ENCODE measurements at regions of chr12 and their contacts with region 1.

Region 1: GRCh38 chr12:108691175-108691997 is 39.9 kb downstream of the CORO1C start:
- DNase-seq: peak; percentile 80 to 98 (median 85)
- ATAC-seq: peak; percentile 89
- H3K4me3 ChIP-seq: peak overlapping the region; percentile 15; the same call in 1 of the 2 replicates
- H3K27ac ChIP-seq: peak overlapping the region; percentile 99
- H3K4me1 ChIP-seq: peaks cover 47 to 83% of the 10 kb centered on the region in 2 experiments
- H3K27me3 ChIP-seq: no peaks in the 10 kb centered on the region
- CTCF ChIP-seq: peak; percentile 33 to 55 (median 51); a peak in 4 of 6 replicates
- EP300 ChIP-seq: peak; percentile 96
- POLR2A ChIP-seq: peak; percentile 83
- RAD21 ChIP-seq: peak in 1 of 2 experiments; percentile 36; a peak in 1 of 4 replicates

Region 2: GRCh38 chr12:108633534-108634248 is 57.7 kb before region 1 on chr12 and contains the start of gene SELPLG:
- CTCF ChIA-PET with region 1: no interaction called
- POLR2A ChIA-PET with region 1: no interaction called
- in situ Hi-C with region 1: no loop called
- intact Hi-C with region 1: loop called (anchors 5 kb)
- DNase-seq: peak in 3 of 4 experiments; percentile 40 to 50 (median 45)
- ATAC-seq: no peak
- H3K4me3 ChIP-seq: no peak within 1 kb of the TSS
- H3K27ac ChIP-seq: peak within 1 kb of the TSS; percentile 76
- H3K4me1 ChIP-seq: peaks cover 55 to 57% of the 10 kb centered on the region in 2 experiments
- H3K27me3 ChIP-seq: no peaks in the 10 kb centered on the region
- CTCF ChIP-seq: no peak
- EP300 ChIP-seq: no peak
- POLR2A ChIP-seq: no peak
- RAD21 ChIP-seq: no peak
- polyA plus RNA-seq, gene SELPLG: 0.22 to 0.34 TPM

Region 3: GRCh38 chr12:108701779-108702441 is 10.5 kb after region 1 on chr12:
- CTCF ChIA-PET with region 1: no interaction called
- POLR2A ChIA-PET with region 1: interaction called, 33 read pairs
- in situ Hi-C with region 1: no loop called
- intact Hi-C with region 1: no loop called
- DNase-seq: peak in 2 of 4 experiments; percentile 35 to 68
- ATAC-seq: peak; percentile 76
- H3K4me3 ChIP-seq: no peak overlapping the region
- H3K27ac ChIP-seq: peak overlapping the region; percentile 63
- H3K4me1 ChIP-seq: peaks cover 16 to 60% of the 10 kb centered on the region in 2 experiments
- H3K27me3 ChIP-seq: no peaks in the 10 kb centered on the region
- CTCF ChIP-seq: no peak
- EP300 ChIP-seq: peak; percentile 24; the same call in 1 of the 2 replicates
- POLR2A ChIP-seq: no peak
- RAD21 ChIP-seq: no peak

Region 4: DNA sequence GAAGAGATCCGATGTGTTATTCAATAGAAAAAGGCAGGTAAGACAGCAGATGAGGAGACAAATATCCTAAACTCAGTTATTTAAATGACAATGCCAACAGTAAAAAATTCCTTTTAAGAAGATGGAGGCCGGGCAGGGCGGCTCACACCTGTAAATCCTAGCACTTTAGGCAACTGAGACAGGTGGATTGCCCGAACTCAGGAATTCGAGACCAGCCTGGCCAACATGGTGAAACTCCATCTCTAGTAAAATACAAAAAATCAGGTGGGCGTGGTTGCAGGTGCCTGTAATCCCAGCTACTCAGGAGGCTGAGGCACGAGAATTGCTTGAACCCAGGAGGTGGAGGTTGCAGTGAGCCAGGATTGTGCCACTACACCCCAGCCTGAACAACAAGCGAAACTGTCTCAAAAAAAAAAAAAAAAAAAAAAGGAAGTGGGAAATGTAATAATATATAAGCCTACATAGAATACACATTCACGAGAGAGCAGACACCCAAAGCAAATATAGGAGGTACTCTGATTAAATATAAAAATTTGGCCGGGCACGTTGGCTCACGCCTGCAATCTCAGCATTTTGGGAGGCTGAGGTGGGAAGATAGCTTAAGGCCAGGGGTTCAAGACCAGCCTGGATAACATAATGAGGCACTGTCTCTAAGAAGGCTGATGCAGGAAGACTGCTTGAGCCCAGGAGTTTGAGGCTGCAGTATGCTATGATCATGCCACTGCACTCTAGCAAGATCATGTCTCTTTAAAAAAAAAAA is 21.0 kb after region 1 on chr12:
- CTCF ChIA-PET with region 1: no interaction called
- POLR2A ChIA-PET with region 1: interaction called, 11 read pairs
- in situ Hi-C with region 1: no loop called
- intact Hi-C with region 1: no loop called
- DNase-seq: no peak
- ATAC-seq: no peak
- H3K4me3 ChIP-seq: no peak overlapping the region
- H3K27ac ChIP-seq: no peak overlapping the region
- H3K4me1 ChIP-seq: peaks cover 18 to 26% of the 10 kb centered on the region in 2 experiments; a peak in 4 of 5 replicates
- H3K27me3 ChIP-seq: no peaks in the 10 kb centered on the region
- CTCF ChIP-seq: no peak
- EP300 ChIP-seq: no peak
- POLR2A ChIP-seq: no peak
- RAD21 ChIP-seq: no peak

Region 5: DNA sequence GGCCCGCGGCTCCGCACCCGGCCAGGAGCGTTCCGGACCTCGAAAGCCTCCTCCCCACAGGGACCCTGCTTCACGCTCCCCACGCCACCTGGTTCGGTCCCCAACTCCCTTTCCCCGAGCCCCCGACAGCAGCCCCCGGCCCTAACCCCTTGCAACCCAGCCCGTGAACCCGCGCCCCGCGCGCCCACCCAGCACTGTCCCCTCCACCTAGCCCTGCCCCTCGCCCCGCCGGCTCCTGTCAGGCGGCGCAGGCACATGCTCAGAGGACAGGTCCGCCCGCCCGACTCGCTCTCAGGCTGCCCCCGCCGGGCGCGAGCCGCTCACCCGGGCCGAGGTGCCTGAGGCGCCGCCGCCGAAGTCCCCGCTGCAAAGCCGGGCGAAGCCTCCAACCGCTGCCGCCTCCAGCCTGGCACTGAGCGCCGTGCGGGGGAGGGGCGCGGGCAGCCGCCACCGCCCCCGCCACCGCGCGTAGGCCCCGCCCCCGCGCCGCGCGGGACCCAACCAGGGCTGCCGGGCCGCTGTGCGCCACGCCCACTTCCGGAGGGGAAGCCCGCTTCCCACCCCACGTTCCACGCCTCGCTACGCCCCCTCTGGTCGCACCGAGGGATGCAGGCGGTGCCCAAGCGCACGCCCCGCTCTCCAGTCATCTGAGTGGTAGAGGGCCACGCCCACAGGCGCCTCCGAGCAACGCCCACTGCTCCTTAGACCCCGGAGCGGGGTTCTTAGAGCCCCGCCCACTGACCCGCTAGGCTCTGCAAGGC is 39.9 kb after region 1 on chr12 and contains the start of gene CORO1C:
- CTCF ChIA-PET with region 1: no interaction called
- POLR2A ChIA-PET with region 1: interaction called, 4 read pairs
- in situ Hi-C with region 1: no loop called
- intact Hi-C with region 1: loop called (anchors 2 kb)
- DNase-seq: peak; percentile 95 to 97 (median 96)
- ATAC-seq: peak; percentile 77
- H3K4me3 ChIP-seq: peak within 1 kb of the TSS; percentile 89
- H3K27ac ChIP-seq: peak within 1 kb of the TSS; percentile 93
- H3K4me1 ChIP-seq: peaks cover 21 to 32% of the 10 kb centered on the region in 2 experiments
- H3K27me3 ChIP-seq: no peaks in the 10 kb centered on the region
- CTCF ChIP-seq: peak; percentile 77 to 85 (median 80)
- EP300 ChIP-seq: no peak; the same call in 1 of the 2 replicates
- POLR2A ChIP-seq: peak; percentile 78
- RAD21 ChIP-seq: peak in 1 of 2 experiments; percentile 53; a peak in 3 of 4 replicates
- polyA plus RNA-seq, gene CORO1C: 55.2 to 68.6 TPM

Region 6: GRCh38 chr12:108803428-108804105 is 112.2 kb after region 1 on chr12:
- CTCF ChIA-PET with region 1: interaction called, 10 read pairs
- POLR2A ChIA-PET with region 1: interaction called, 3 read pairs
- in situ Hi-C with region 1: no loop called
- intact Hi-C with region 1: loop called (anchors 1 kb)
- DNase-seq: peak; percentile 82 to 87 (median 83)
- ATAC-seq: peak; percentile 96
- H3K4me3 ChIP-seq: no peak overlapping the region
- H3K27ac ChIP-seq: no peak overlapping the region
- H3K4me1 ChIP-seq: peaks cover 2 to 3% of the 10 kb centered on the region in 2 experiments; a peak in 3 of 5 replicates
- H3K27me3 ChIP-seq: no peaks in the 10 kb centered on the region
- CTCF ChIP-seq: peak; percentile 86 to 96 (median 86)
- EP300 ChIP-seq: no peak
- POLR2A ChIP-seq: no peak
- RAD21 ChIP-seq: peak; percentile 97 to 98

Region 7: DNA sequence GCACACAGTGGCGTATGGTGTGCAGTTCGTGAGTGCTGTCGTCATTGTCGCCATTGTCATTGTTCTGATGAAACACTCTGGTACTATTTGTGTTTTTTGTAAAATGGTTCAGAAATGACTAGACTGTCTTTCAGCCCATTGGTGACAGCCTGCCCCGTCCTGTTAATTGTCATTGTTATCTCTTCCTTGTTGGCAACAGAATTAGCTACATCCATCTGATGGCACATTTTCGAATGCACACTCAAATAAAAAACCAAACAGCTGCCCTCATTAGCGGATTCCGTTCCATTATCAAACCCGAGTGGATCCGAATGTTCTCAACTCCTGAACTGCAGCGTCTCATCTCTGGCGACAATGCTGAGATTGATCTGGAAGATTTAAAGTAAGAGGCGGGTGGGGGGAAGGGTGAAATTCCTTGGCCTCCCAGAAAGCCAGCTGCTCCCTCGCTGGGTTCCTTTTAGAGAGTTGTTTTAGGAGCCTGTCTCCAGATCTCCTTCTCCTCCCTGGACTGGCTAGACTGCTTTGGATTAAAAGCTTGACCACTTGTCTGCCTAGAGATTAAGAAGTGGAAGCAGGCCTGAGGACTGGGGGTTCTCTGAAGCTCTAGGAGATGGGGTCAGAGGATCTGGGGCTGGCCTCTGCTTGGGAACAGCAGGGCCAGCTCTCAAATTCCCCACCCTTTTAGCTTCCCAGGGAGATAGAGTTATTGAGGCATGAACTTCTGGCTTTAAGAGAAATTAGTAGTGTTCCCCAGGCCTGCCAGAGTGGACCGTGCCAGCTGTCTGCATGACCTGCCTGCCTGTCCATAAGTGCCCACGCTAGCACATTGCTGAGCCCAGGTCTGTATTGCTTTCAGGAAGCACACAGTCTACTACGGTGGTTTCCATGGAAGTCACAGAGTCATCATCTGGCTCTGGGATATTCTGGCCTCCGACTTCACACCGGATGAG is 838.6 kb after region 1 on chr12:
- CTCF ChIA-PET with region 1: no interaction called
- POLR2A ChIA-PET with region 1: no interaction called
- in situ Hi-C with region 1: no loop called
- intact Hi-C with region 1: no loop called
- DNase-seq: no peak
- ATAC-seq: no peak
- H3K4me3 ChIP-seq: no peak overlapping the region
- H3K27ac ChIP-seq: no peak overlapping the region
- H3K4me1 ChIP-seq: peaks cover 0 to 5% of the 10 kb centered on the region in 2 experiments; a peak in 1 of 5 replicates
- H3K27me3 ChIP-seq: no peaks in the 10 kb centered on the region
- CTCF ChIP-seq: no peak
- EP300 ChIP-seq: no peak
- POLR2A ChIP-seq: no peak
- RAD21 ChIP-seq: no peak